Activated naive CD4-positive, alpha-beta T cell treated with anti-CD3 and anti-CD28 coated beads for 36 hours (primary cell): ENCODE measurements at regions of chr1 and their contacts with region 1.

Region 1: GRCh38 chr1:35451125-35451528 is 106.1 kb downstream of the KIAA0319L start:
- DNase-seq: peak; percentile 90
- H3K4me3 Mint-ChIP-seq: no peak overlapping the region
- H3K27ac Mint-ChIP-seq: no peak overlapping the region
- H3K4me1 Mint-ChIP-seq: peaks cover 34% of the 10 kb centered on the region
- H3K27me3 Mint-ChIP-seq: no peaks in the 10 kb centered on the region

Region 2: GRCh38 chr1:34859446-34860200 is 591.5 kb before region 1 on chr1 and contains the start of gene SMIM12:
- CTCF ChIA-PET with region 1: no interaction called
- intact Hi-C with region 1: loop called (anchors 10 kb)
- DNase-seq: peak; percentile 96
- H3K4me3 Mint-ChIP-seq: peak within 1 kb of the TSS; percentile 98
- H3K27ac Mint-ChIP-seq: peak within 1 kb of the TSS; percentile 94
- H3K4me1 Mint-ChIP-seq: peaks cover 53% of the 10 kb centered on the region
- H3K27me3 Mint-ChIP-seq: no peaks in the 10 kb centered on the region
- total RNA-seq, gene SMIM12: 37.6 to 38.6 TPM

Region 3: GRCh38 chr1:35461966-35462651 is 11.0 kb after region 1 on chr1:
- CTCF ChIA-PET with region 1: interaction called, 14 read pairs
- intact Hi-C with region 1: no loop called
- DNase-seq: peak; percentile 35
- H3K4me3 Mint-ChIP-seq: no peak overlapping the region
- H3K27ac Mint-ChIP-seq: peak overlapping the region; percentile 59
- H3K4me1 Mint-ChIP-seq: peaks cover 14% of the 10 kb centered on the region
- H3K27me3 Mint-ChIP-seq: no peaks in the 10 kb centered on the region

Region 4: DNA sequence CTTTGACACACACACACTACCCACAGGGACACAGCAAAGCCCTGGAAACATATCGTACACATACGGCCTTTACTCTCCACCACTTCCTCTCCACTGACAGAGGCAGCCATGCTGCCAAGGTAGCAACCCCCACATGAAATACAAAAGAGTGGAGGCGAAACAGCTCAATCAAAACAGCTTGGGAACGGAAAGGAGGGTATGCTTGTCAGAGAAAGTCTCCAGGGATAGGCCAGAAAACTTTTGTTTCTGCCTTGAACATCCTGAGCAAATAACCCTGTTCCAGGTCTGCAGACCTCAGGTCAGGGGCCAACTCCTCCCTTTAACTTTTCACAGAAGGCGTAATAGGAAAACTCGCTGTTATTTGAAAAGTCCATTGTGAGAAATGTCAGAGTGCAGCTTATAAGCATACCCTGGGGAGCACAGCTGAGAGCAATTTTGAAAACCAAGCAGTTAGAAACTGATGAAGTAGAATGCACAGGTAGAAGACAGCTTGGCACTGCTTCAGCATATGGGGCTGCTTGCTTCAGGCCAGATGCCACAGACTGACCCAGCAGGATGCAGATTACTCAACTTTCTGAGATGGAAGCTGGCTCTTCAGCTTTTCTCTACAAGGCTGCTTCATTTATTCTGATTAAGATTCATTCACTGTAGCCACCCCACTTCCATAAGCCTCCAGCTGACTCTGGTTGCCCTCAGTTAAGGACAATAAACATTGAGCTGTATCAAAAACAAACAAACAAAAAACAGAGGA is 88.1 kb after region 1 on chr1:
- CTCF ChIA-PET with region 1: interaction called, 45 read pairs
- intact Hi-C with region 1: loop called (anchors 1 kb)
- DNase-seq: peak; percentile 49
- H3K4me3 Mint-ChIP-seq: peak overlapping the region; percentile 70
- H3K27ac Mint-ChIP-seq: peak overlapping the region; percentile 90
- H3K4me1 Mint-ChIP-seq: peaks cover 78% of the 10 kb centered on the region
- H3K27me3 Mint-ChIP-seq: no peaks in the 10 kb centered on the region

Region 5: GRCh38 chr1:35557292-35558063 is 106.4 kb after region 1 on chr1 and contains the starts of genes KIAA0319L and NCDN:
- CTCF ChIA-PET with region 1: interaction called, 113 read pairs
- intact Hi-C with region 1: loop called (anchors 2 kb)
- DNase-seq: peak; percentile 98
- H3K4me3 Mint-ChIP-seq: peak within 1 kb of the TSS; percentile 95
- H3K27ac Mint-ChIP-seq: peak within 1 kb of the TSS; percentile 92
- H3K4me1 Mint-ChIP-seq: peaks cover 46% of the 10 kb centered on the region
- H3K27me3 Mint-ChIP-seq: no peaks in the 10 kb centered on the region
- total RNA-seq, gene KIAA0319L: 22.6 to 24.2 TPM
- total RNA-seq, gene NCDN: 12.1 to 13.4 TPM

Region 6: GRCh38 chr1:35569936-35570335 is 118.8 kb after region 1 on chr1:
- CTCF ChIA-PET with region 1: interaction called, 147 read pairs
- intact Hi-C with region 1: no loop called
- DNase-seq: no peak
- H3K4me3 Mint-ChIP-seq: no peak overlapping the region
- H3K27ac Mint-ChIP-seq: no peak overlapping the region
- H3K4me1 Mint-ChIP-seq: no peaks in the 10 kb centered on the region
- H3K27me3 Mint-ChIP-seq: peaks cover 9% of the 10 kb centered on the region

Region 7: GRCh38 chr1:35715568-35716002 is 264.5 kb after region 1 on chr1:
- CTCF ChIA-PET with region 1: interaction called, 15 read pairs
- intact Hi-C with region 1: loop called (anchors 2 kb)
- DNase-seq: peak; percentile 88
- H3K4me3 Mint-ChIP-seq: peak overlapping the region; percentile 42
- H3K27ac Mint-ChIP-seq: no peak overlapping the region
- H3K4me1 Mint-ChIP-seq: peaks cover 24% of the 10 kb centered on the region
- H3K27me3 Mint-ChIP-seq: no peaks in the 10 kb centered on the region